ENCODE measurements at regions of chr4 and their contacts with region 1.

Region 1: GRCh38 chr4:73142995-73143547 is 73.6 kb upstream of the COX18 start:
- DNase-seq: no peak
- ATAC-seq: no peak

Region 2: DNA sequence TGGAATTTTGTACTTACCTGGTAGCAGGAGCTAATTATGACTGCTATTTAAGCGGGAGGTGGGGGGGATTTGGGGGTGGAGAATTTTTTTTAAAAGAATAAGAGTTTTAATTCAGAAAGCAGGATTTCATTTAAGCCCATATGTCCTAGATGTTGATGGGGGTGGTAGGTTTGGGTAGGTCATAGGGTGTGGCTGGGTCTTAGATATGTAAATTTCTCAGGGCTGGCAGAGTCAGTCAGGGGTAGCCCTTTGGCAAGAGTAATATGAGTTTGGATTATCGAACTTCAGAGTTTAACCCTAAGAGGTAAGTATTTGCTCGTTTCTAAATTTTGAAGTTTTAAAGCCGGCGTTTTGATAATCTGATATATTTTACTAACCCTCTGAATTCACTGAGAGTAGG is 38.4 kb before region 1 on chr4:
- intact Hi-C with region 1: loop called (anchors 5 kb)
- DNase-seq: no peak
- ATAC-seq: no peak